ENCODE measurements at regions of chr12 and their contacts with region 1.

Region 1: DNA sequence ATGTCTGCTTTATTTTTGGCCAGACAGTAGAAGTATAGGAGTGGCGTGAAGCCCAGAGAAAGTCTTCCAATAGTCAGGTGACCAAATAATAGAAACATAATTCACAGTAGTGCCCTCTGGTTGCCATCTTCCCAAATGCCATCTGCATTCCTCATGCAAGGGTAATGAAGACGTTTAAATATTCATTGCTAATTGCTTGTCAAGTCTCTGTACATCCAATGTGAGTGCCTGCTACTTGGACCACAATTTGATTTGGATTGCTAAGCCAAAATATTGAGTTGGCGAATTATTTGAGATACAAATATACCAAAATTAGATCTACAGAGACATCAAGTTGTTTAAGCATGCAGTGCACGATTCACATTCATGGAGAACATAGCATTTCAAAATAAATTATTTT is 402.7 kb downstream of the SOX5 start:
- DNase-seq: no peak
- ATAC-seq: no peak

Region 2: GRCh38 chr12:23648546-23648945 is 101.8 kb after region 1 on chr12:
- intact Hi-C with region 1: no loop called
- DNase-seq: no peak
- ATAC-seq: no peak

Region 3: DNA sequence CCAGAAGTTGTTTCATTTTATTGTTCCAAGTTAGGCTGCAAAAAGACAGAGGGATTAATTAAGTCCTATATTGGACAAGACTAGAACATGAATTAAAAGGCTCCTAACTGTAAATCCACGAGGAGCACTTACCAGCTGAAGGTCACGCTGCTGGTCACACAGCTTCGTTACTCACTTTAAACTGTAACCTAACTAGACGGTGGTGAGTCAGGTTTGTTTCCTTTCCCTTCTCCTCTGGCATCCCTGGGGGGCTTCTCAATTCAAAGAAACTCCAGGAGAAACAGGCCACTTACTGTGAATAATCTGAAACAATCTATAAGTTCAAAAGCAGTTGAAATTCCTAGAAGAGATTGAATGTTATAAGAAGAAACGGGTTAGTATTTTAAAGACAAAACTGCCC is 1070.7 kb after region 1 on chr12:
- intact Hi-C with region 1: loop called (anchors 5 kb)
- DNase-seq: no peak
- ATAC-seq: no peak

Measured in Right ventricle myocardium inferior (tissue), 1 donor.